Transverse colon (tissue), 4 donors: ENCODE measurements at regions of chr1 and their contacts with region 1.

Region 1: GRCh38 chr1:100851726-100852125 is 42.9 kb downstream of the EXTL2 start:
- DNase-seq: no peak
- H3K4me3 ChIP-seq: no peak overlapping the region
- H3K27ac ChIP-seq: no peak overlapping the region
- H3K4me1 ChIP-seq: no peaks in the 10 kb centered on the region
- H3K27me3 ChIP-seq: no peaks in the 10 kb centered on the region
- CTCF ChIP-seq: no peak
- EP300 ChIP-seq: no peak
- POLR2A ChIP-seq: no peak

Region 2: GRCh38 chr1:100866041-100866900 is 14.5 kb after region 1 on chr1:
- in situ Hi-C with region 1: no loop called
- intact Hi-C with region 1: no loop called
- DNase-seq: no peak
- H3K4me3 ChIP-seq: no peak overlapping the region
- H3K27ac ChIP-seq: no peak overlapping the region
- H3K4me1 ChIP-seq: no peaks in the 10 kb centered on the region
- H3K27me3 ChIP-seq: no peaks in the 10 kb centered on the region
- CTCF ChIP-seq: peak; percentile 34 to 52 (median 39)
- EP300 ChIP-seq: no peak
- POLR2A ChIP-seq: no peak

Region 3: DNA sequence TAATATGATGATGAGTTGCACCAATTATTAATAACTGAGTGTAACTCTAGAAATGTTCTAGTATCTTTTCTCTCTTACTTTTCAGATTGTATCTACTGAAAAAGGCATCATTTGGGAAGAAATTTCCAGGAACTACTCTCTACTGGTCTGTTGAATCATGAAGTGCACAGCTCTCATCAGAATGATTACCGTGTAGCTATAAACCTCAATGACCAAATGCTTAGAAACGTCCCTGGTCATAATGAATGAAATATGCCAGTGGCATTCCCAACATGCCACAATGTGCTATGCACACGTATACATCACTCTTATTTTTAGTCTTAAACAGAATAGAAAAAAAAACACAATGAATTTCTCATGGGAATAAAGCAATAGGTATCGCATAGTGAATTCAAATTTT is 1679.3 kb after region 1 on chr1:
- in situ Hi-C with region 1: no loop called
- intact Hi-C with region 1: loop called (anchors 10 kb)
- DNase-seq: no peak
- H3K4me3 ChIP-seq: no peak overlapping the region
- H3K27ac ChIP-seq: no peak overlapping the region
- H3K4me1 ChIP-seq: no peaks in the 10 kb centered on the region
- H3K27me3 ChIP-seq: no peaks in the 10 kb centered on the region
- CTCF ChIP-seq: no peak
- EP300 ChIP-seq: no peak
- POLR2A ChIP-seq: no peak